Cardiac septum (tissue), 1 donor: ENCODE measurements at regions of chr1 and their contacts with region 1.

Region 1: DNA sequence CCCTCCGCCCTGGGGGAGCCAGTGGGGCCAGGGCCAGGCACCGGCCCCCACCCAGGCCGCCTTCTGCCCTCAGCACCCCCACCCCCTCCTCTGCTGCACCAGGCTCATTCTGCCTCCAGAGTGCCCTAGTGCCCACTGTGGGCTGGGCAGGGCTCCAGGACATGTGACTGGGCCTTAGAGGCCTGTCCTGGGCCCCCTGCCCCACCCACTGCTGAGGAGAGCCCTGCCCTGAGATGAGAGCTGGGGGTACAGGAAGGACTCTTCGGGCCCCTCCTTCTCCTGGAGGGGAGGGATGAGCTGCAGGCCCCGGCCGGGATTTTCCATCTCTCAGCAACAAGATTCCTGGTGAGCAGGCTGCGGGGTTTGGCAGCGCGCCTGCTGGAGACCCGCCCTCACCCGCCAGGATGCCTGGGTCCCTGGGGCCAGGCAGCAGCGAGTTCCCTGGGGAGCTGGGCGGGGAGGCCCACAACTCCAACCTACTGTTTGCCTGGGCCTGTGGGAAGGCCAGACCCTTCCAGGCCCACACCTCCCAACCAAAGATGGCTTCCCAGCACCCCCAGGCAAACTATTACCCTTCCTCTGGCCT is 14.0 kb downstream of the AHDC1 start:
- DNase-seq: no peak

Region 2: DNA sequence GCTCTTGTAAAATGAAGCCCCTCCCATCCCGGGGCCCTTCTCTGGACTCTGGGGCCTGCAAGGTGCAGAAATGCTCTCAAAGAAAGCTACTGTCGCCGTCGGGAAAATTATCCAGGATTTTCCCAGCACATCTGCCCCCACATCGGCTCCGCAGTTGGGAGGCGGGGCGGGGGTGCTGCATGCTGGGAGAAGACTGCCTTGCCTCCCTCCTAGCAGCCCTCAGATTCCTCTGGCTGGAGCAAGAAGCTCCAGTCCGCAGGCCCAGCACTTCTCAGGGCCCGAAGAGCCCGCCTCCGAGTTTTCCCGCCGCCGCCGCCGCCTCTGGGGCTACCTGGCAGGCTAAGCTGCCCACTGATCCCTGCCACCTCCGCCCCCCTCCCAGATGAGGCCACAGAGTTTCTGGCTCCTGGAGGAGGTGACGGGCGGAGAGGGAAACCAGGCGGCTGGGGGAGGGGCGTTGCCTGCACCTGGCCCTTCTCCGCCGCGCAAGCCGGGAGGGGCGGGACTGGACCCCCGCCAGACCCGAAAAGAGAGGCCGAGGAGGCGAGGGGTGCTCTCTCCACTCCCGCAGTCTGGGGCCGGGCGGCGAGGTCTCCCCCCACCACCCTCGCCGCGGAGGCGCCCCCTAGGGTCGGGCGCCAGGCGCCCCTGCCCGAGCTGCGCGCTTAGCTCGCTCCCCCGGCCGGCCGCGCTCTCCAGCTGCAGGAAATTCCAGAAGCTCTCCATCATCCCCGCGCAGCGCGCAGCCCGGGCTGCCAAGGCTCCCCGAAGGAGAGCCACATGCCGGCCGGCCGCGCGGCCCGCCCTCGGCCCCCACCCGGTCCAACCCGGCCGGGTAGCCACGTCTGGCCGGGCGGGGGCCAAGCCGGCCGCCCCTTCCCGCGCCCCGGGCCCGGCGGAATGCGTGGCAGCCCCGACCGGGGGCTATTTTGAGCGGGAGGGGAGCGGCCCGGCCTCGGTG is 14.8 kb before region 1 on chr1:
- intact Hi-C with region 1: loop called (anchors 1 kb)
- DNase-seq: peak; percentile 92